RWPE1 (cell line): ENCODE measurements at regions of chr5 and their contacts with region 1.

Region 1: GRCh38 chr5:128340648-128341420 is 197.2 kb downstream of the FBN2 start:
- DNase-seq: no peak
- H3K27ac ChIP-seq: no peak overlapping the region
- CTCF ChIP-seq: no peak

Region 2: DNA sequence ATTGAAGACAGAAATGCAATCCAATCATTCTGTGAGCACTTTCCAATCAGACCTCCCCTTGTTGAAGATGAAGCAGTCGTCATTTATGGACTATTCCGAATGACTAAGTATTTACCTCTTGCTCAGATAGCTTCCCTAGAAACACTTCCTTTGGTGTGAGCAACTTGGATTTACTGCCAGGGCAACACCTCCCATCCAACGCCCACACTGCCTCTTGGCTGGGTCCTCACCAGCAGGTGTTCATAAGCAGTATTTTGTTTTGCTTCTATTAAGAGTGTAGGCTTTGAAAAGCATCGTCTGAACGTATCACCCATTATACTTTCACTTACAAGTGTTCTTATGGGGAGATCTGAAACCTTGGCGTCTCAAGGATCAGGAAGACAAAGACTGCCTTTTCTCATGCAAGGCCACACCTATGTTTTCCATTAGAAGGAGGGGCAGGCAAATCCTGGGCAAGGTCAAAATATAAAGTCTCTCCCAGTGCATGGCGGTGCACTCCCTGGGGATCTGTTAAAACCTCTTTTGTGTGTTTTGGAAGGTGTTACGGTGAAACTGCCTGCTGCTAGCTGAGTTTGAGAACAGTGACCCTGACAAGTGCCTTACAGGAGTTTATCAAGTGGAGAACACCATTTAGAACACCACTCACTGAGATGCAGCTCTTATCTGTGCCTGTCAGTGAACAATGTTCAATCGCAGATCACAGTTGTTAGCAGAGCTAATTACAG is 1299.9 kb before region 1 on chr5:
- CTCF ChIA-PET with region 1: no interaction called
- POLR2A ChIA-PET with region 1: interaction called, 14 read pairs
- DNase-seq: peak; percentile 82
- H3K27ac ChIP-seq: no peak overlapping the region
- CTCF ChIP-seq: no peak

Region 3: GRCh38 chr5:128062172-128062746 is 278.6 kb before region 1 on chr5:
- CTCF ChIA-PET with region 1: no interaction called
- POLR2A ChIA-PET with region 1: no interaction called
- DNase-seq: peak; percentile 55
- H3K27ac ChIP-seq: no peak overlapping the region
- CTCF ChIP-seq: no peak

Region 4: DNA sequence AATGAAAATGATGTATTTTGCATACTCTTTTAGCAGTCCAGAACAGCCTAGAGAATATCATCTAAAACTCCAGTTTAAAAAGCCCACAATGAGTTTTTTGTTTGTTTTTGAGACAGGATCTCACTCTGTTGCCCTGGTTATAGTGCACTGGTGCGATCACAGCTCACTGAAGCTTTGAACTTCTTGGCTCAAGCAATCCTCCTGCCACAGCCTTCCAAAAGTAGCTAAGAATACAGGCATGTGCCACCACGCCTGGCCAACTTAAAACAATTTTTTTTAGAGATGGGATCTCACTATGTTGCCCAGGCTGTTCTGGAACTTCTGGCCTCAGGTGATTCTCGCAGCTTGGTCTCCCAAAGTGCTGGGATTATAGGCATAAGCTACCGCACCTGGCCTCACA is 21.5 kb after region 1 on chr5:
- CTCF ChIA-PET with region 1: no interaction called
- POLR2A ChIA-PET with region 1: no interaction called
- DNase-seq: no peak
- H3K27ac ChIP-seq: no peak overlapping the region
- CTCF ChIP-seq: no peak

Region 5: DNA sequence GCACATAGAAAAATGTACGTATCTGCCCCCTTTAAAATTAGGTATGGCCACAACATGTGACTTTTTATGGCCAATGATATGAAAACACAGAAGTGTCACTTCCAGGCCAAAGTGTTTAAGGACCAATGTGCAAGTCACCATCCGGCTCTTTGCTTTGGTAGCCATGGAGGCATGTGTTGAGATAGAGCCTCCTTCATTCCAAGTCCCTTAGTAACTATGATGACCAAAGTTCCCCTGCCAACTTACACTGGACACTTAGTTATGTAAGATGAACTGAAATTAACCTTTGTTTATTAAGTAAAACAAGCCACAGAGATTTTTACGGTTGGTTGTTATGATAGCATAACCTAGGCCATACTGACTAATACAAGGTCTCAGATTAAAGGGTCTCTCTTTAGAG is 146.2 kb after region 1 on chr5:
- CTCF ChIA-PET with region 1: no interaction called
- POLR2A ChIA-PET with region 1: no interaction called
- DNase-seq: no peak
- H3K27ac ChIP-seq: no peak overlapping the region
- CTCF ChIP-seq: no peak